HEK293T (cell line): ENCODE measurements at regions of chr7 and their contacts with region 1.

Region 1: DNA sequence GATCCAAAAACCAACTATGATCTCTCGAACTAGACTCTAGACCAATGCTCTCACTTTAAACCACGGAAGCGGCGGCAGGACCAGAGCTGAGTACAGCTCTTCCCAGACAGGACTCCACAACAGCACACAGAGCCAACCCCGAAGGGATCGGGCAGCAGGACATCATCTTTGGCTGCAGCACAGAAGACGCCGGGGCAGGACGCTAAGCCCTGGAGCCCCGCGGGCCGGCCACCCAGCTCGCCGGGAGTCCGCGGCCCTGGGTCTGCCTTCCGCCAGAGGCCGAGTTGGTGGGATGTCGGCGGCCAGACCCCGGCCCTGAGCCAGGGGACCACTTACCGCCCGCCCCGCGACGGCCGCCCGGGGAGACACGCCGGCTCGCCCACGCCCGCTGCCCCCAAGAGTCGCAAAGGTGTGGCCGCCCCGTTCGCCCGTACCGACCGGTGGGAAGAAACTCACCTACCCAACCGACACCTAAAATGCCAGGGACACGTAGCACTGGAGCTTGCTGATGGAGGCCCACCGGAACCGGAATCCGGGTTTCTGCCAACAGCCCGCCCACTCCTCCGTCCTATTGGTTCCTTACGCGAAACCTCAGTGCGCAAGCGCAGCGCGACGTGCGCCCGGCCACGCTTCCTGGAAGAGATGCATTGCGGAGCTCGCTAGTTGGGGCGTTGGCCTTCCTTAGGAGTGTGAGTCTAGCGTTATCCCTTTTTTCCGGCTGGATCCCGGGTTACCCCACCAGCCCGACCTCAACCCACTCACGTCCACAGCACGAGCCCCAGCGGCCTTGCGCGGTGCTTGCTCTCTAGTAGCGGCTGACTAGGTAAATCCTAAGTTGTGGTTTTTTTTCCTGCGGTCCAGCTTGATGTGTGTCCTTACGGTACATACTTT is at the start of gene SEC61G:
- DNase-seq: peak; percentile 93

Region 2: GRCh38 chr7:54556121-54556520 is 202.8 kb before region 1 on chr7:
- CTCF ChIA-PET with region 1: no interaction called
- POLR2A ChIA-PET with region 1: no interaction called
- DNase-seq: no peak

Region 3: DNA sequence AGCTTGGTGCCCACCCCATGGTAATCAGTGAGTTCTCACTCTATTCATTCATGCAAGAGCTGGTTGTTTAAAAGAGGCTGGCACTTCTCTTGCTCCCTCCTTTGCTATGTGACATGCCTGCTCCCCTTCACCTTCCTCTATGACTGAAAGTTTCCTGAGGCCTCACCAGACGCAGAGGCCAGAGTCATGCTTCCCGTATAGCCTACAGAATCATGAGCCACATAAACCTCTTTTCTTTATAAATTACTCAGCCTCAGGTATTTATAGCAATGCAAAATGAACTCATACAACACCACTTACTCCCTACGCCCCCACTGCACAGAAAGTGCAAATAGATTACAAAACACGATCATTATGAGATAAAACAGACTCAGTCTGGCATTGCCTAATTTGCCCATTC is 39.0 kb before region 1 on chr7:
- CTCF ChIA-PET with region 1: no interaction called
- POLR2A ChIA-PET with region 1: no interaction called
- DNase-seq: no peak

Region 4: GRCh38 chr7:54743580-54743979 is 15.4 kb before region 1 on chr7:
- CTCF ChIA-PET with region 1: no interaction called
- POLR2A ChIA-PET with region 1: interaction called, 10 read pairs
- DNase-seq: no peak

Region 5: GRCh38 chr7:54773472-54774399 is 14.8 kb after region 1 on chr7:
- CTCF ChIA-PET with region 1: interaction called, 3 read pairs
- POLR2A ChIA-PET with region 1: interaction called, 20 read pairs
- DNase-seq: peak; percentile 76

Region 6: GRCh38 chr7:55059021-55059420 is 300.1 kb after region 1 on chr7:
- CTCF ChIA-PET with region 1: no interaction called
- POLR2A ChIA-PET with region 1: no interaction called
- DNase-seq: no peak

Region 7: DNA sequence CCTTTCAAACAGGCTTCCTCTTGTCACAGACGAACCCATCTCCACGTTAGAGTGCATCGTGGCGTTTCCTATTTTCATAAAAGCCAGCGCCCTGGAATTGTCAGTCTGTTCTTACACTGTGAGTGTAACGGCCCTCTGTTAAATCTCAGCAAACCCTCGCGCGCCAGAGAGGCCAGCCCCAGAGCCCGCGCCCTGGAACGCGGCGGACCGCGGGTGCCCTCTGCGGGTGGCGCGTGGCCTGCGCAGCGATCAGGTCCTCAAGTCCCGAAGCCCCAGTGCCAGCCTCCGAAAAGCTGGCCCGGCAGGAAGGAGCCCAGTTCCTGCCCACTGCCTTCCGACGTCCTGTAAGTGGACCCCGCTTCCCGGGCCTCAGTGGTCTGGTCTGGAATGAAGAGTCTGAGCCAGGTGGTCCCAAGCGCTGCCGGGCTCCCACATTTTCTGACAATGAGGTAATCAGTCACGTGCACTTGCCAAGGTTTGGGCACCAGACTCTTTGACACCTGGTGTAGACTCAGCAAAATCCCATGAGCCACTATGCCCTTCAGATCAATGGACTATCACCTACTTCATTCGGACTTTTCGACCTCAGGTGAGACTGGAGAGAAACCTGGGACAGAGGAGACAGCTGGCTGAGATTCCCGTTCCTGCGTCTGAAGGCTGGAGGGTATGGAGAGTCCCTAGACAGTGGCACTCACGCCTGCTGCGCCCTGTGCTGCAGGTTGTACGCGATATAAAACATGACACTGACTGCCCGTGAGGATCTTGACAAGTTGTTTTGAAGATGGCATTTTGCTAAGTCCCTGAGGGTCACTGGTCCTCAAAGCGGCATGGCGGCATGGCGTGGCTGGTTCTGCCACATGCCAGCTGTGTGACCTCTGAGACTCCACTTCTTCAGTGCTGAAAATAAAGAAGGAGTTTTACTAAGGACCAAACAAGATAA is 496.8 kb after region 1 on chr7:
- CTCF ChIA-PET with region 1: no interaction called
- POLR2A ChIA-PET with region 1: interaction called, 10 read pairs
- DNase-seq: peak; percentile 81